IMR-90 (cell line): ENCODE measurements at regions of chr6 and their contacts with region 1.

Region 1: GRCh38 chr6:17098538-17098937 is 3.3 kb upstream of the STMND1 start:
- DNase-seq: peak; percentile 47
- ATAC-seq: peak; percentile 71
- H3K4me3 ChIP-seq: no peak overlapping the region
- H3K27ac ChIP-seq: no peak overlapping the region
- H3K4me1 ChIP-seq: peaks cover 5% of the 10 kb centered on the region; the same call in 1 of the 2 replicates
- H3K27me3 ChIP-seq: peaks cover 35% of the 10 kb centered on the region
- CTCF ChIP-seq: no peak
- POLR2A ChIP-seq: no peak
- RAD21 ChIP-seq: no peak

Region 2: GRCh38 chr6:16731478-16732051 is 367.0 kb before region 1 on chr6:
- CTCF ChIA-PET with region 1: no interaction called
- POLR2A ChIA-PET with region 1: interaction called, 15 read pairs
- dilution Hi-C with region 1: no loop called
- in situ Hi-C with region 1: no loop called
- intact Hi-C with region 1: no loop called
- DNase-seq: no peak
- ATAC-seq: no peak
- H3K4me3 ChIP-seq: no peak overlapping the region
- H3K27ac ChIP-seq: no peak overlapping the region
- H3K4me1 ChIP-seq: peaks cover 13% of the 10 kb centered on the region
- H3K27me3 ChIP-seq: no peaks in the 10 kb centered on the region
- CTCF ChIP-seq: no peak
- POLR2A ChIP-seq: no peak
- RAD21 ChIP-seq: no peak